ENCODE measurements at regions of chr11 and their contacts with region 1.

Region 1: GRCh38 chr11:19561011-19561410 is 151.6 kb upstream of the NAV2 start:
- DNase-seq: no peak
- ATAC-seq: no peak
- H3K4me3 ChIP-seq: no peak overlapping the region
- H3K27ac ChIP-seq: no peak overlapping the region
- H3K4me1 ChIP-seq: peaks cover 0 to 26% (median 7%) of the 10 kb centered on the region in 9 donors
- H3K27me3 ChIP-seq: no peaks in the 10 kb centered on the region
- CTCF ChIP-seq: no peak

Region 2: DNA sequence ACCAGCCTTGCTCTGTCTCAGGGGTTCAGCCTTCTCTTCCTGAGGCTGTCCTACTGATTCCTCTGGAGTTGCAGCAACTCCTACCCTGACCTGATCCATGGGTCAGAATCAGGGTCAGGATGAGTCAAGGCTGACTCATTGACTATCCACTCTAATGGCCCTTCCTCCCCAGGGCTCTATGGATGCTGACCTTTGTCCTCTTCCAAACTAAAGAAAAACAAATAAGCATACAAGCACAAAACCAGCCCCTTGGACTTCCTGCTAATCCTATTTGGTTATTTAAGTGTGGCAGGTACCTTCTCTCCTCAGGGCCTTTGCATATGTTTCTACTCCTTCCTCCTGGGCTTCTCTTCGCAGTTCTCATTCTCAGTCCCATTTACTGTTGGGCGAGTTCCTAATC is 52.9 kb before region 1 on chr11:
- intact Hi-C with region 1: no loop called
- DNase-seq: no peak
- ATAC-seq: peak in 4 of 8 donors; percentile 22 to 77 (median 44)
- H3K4me3 ChIP-seq: no peak overlapping the region
- H3K27ac ChIP-seq: no peak overlapping the region
- H3K4me1 ChIP-seq: peaks cover 0 to 32% (median 19%) of the 10 kb centered on the region in 9 donors
- H3K27me3 ChIP-seq: peaks cover 0 to 7% (median 0%) of the 10 kb centered on the region in 7 donors
- CTCF ChIP-seq: no peak

Region 3: DNA sequence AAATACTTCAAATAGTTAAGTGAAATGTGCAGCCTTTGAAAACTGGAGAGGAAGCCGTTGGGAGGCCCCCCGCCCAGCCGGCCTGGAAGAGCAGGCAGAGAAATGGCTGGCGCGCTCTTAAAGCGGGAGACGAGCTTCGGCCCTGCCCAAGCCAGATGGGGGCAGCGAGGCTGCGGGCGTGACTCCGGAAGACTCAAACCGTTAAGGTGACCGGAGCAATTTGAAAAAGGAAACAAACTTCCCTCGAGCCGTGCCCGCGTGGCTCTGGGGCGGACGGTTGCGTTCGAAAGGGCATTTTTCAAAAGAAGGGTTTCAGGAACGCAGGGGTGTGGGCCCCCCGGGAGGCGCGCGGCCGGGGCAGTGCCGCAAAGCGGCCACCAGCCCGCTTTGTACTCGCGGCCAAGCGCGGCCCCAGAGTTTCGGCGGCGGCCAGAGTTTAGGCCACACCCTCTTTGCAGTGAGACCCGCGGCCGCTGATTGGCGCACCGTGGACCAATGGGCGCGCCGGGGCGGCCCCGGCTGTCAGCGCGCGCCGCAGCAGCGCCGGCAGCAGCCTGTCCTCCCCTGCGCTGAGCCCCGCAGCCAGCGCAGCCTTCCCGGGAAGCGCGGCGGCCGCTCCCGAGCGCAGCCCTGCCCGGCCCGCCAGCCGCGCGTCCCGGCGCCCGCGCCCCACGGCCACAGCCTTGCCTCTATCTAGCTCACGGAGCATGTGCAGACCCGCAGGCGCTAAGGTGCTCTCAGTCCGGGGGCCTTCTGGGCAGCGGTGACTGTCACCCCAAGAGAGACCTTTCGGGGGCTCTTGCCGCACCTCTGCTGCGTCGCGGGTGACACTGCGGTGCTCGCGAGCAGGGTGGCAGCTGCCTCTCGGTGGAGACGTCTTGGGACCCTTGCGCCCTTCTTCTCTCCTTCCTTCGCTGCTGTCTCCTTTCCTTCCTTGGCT is 151.5 kb after region 1 on chr11 and contains the start of gene NAV2:
- intact Hi-C with region 1: loop called in 1 of 10 experiments (anchors 1 kb)
- DNase-seq: peak; percentile 92 to 93
- ATAC-seq: peak; percentile 88 to 97 (median 94)
- H3K4me3 ChIP-seq: peak within 1 kb of the TSS; percentile 50 to 83 (median 74)
- H3K27ac ChIP-seq: peak within 1 kb of the TSS; percentile 85 to 98 (median 96)
- H3K4me1 ChIP-seq: peaks cover 7 to 60% (median 47%) of the 10 kb centered on the region in 9 donors
- H3K27me3 ChIP-seq: peaks cover 0 to 33% (median 0%) of the 10 kb centered on the region in 7 donors
- CTCF ChIP-seq: peak in 4 of 9 donors; percentile 4 to 21 (median 13)
- total RNA-seq, gene NAV2: 11.3 to 34.7 (median 23.7) TPM

Region 4: DNA sequence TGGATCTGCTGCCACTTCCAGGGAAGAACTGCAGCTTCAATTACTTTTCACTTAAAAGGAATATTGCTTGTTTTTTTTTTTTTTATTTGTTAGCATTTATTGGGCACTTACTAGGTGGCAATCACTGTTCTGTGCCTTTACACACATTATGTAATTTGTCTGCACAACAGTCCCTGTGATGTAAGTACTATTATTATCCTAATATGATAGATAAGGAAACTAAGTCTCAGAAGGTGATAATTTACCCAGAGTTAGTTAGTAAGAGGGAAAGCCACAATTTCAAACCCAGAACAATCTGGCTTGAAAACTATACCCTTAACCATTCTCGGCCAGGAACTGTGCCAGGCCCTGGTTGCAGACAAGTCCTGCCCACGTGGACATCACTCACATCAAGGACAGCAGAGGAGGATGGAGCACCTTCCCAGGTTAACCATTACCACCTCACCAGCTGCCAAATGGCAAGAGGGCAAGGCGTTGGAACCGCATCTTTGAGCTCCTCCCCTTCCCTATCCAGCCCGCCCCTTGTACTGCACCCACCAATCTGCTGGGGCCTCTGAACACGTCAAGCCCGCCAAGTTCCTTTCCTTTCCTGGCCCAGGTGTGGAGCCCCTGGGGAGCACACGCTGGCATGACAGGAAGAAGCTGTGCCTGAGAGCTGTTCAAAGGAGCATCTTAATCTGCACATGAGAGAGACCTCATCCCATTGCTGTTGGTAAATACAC is 230.0 kb after region 1 on chr11:
- intact Hi-C with region 1: loop called in 1 of 10 experiments (anchors 5 kb)
- DNase-seq: no peak
- ATAC-seq: peak in 1 of 8 donors; percentile 6
- H3K4me3 ChIP-seq: no peak overlapping the region
- H3K27ac ChIP-seq: no peak overlapping the region
- H3K4me1 ChIP-seq: peaks cover 0 to 69% (median 39%) of the 10 kb centered on the region in 9 donors
- H3K27me3 ChIP-seq: no peaks in the 10 kb centered on the region
- CTCF ChIP-seq: no peak

Region 5: GRCh38 chr11:19800162-19800561 is 239.2 kb after region 1 on chr11:
- intact Hi-C with region 1: loop called in 8 of 10 experiments (anchors 5 to 10 kb)
- DNase-seq: no peak
- ATAC-seq: peak in 6 of 8 donors; percentile 23 to 60 (median 42)
- H3K4me3 ChIP-seq: no peak overlapping the region
- H3K27ac ChIP-seq: no peak overlapping the region
- H3K4me1 ChIP-seq: peaks cover 0 to 78% (median 31%) of the 10 kb centered on the region in 9 donors
- H3K27me3 ChIP-seq: no peaks in the 10 kb centered on the region
- CTCF ChIP-seq: peak in 7 of 9 donors; percentile 15 to 46 (median 36)

Region 6: DNA sequence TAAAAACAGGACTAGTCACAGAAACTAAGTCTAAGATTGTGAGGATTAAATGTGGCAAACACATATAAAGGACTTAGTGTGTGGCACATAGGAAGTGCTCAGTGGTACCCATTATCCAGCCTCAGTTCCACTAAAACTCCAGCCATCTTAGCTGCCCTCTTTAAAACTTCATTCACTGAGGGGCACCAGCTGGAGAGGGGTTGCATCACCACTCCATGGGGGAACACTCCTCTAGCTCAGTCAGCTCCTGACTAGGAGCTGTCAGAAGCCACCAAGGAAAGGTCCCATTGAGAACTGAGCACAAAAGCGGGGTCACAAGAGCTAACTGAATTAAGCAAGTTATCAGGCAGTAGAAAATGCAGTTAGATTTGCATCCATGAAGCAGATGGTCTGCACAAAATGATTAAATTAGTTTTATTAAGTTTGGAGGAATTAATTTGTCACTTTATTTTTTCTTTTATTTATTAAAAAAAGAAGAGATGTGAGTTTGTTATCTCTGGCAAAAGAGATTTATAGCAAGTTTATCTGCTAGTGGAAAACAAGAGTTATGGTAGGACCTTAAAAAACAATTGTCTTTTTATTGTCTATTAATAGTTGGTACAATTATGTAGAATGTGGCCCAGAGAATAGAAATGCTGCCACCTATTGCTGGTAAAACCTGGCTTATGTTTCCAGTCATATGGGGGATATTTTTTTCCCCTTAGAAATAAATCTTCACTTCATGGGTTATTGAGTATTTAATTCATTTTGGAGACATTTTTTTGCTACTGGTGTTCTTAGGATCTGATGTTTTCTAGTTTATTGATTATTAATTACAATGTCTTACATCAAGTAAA is 247.3 kb after region 1 on chr11:
- intact Hi-C with region 1: loop called in 7 of 10 experiments (anchors 5 to 10 kb)
- DNase-seq: no peak
- ATAC-seq: no peak
- H3K4me3 ChIP-seq: no peak overlapping the region
- H3K27ac ChIP-seq: no peak overlapping the region
- H3K4me1 ChIP-seq: peaks cover 0 to 77% (median 36%) of the 10 kb centered on the region in 9 donors
- H3K27me3 ChIP-seq: no peaks in the 10 kb centered on the region
- CTCF ChIP-seq: peak in 8 of 9 donors; percentile 11 to 55 (median 35)

Region 7: DNA sequence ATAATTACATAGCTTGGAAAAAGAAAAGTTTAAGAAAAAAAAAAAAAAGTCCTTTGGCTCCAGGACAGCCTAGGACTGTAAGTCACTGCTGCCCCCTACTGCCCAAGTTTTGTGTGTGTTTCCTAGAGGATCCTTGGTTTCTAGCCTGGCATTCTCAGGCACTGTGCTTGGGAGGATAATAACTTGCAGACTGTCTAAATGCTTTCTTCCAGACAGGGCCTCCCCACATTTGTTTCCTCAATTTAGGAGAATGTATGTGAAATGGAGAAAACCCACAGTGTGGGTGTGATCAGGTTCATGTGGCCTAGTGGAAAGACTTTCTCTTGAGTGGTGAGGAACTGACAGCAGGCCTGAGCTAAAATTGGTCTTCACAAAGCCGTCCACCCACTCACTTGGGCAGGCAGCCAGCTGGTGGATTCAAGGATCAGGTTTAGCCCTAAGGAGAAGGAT is 342.6 kb after region 1 on chr11:
- intact Hi-C with region 1: loop called (anchors 1 to 5 kb)
- DNase-seq: peak; percentile 37 to 72
- ATAC-seq: peak; percentile 50 to 80 (median 67)
- H3K4me3 ChIP-seq: no peak overlapping the region
- H3K27ac ChIP-seq: no peak overlapping the region
- H3K4me1 ChIP-seq: peaks cover 0 to 20% (median 4%) of the 10 kb centered on the region in 9 donors
- H3K27me3 ChIP-seq: no peaks in the 10 kb centered on the region
- CTCF ChIP-seq: peak; percentile 62 to 87 (median 82)

Region 8: GRCh38 chr11:20110908-20111669 is 550.1 kb after region 1 on chr11:
- intact Hi-C with region 1: loop called in 2 of 10 experiments (anchors 10 kb)
- DNase-seq: peak in 1 of 2 donors; percentile 18
- ATAC-seq: peak in 7 of 8 donors; percentile 7 to 53 (median 32)
- H3K4me3 ChIP-seq: no peak overlapping the region
- H3K27ac ChIP-seq: peak overlapping the region in 7 of 10 donors; percentile 60 to 84 (median 76)
- H3K4me1 ChIP-seq: peaks cover 5 to 27% (median 24%) of the 10 kb centered on the region in 9 donors
- H3K27me3 ChIP-seq: no peaks in the 10 kb centered on the region
- CTCF ChIP-seq: peak; percentile 69 to 88 (median 84)

Measured in heart right ventricle (tissue), 16 donors.